Endothelial cell of umbilical vein (primary cell): ENCODE measurements at regions of chr2 and their contacts with region 1.

Region 1: DNA sequence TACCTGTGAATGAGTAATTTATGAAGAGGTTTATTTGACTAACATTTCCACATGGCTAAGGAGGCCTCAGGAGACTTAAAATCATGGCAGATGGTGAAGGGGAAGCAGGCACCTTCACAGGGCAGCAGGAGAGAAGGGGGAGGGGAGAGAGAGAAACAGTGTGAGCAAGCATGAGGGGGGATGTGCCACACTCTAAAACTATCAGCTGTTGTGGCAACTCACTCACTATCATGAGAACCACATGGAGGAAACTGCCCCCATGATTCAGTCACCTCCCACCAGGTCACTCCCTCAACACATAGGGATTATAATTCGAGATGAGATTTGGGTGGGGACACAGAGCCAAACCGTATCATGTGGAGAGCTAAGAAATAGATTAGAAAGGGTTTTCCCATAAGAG is 309.0 kb downstream of the RDH14 start:
- DNase-seq: no peak
- H3K4me3 ChIP-seq: no peak overlapping the region
- H3K27ac ChIP-seq: no peak overlapping the region
- H3K4me1 ChIP-seq: no peaks in the 10 kb centered on the region
- H3K27me3 ChIP-seq: peaks cover 0 to 3% of the 10 kb centered on the region in 2 experiments
- CTCF ChIP-seq: no peak
- POLR2A ChIP-seq: no peak

Region 2: DNA sequence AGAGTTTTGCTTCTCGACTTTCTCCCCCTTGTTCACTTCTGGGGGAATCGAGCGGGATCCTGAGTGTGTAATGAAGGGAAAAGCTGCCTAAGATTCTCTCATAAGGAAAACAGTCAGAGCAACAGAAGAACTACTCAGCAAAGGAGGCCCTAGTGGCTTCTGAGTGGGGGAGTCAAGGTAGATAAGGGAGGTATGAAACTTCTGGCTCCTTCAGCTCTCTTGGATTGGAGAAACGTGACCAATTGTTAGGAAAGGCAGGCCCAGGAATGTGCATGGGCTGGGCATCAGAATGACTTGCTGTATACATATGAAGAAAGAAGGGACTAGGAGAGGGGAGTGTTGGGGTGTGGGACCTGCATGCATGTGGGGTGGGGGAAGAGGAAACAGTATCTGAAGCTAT is 299.9 kb before region 1 on chr2:
- CTCF ChIA-PET with region 1: no interaction called
- POLR2A ChIA-PET with region 1: no interaction called
- dilution Hi-C with region 1: no loop called
- intact Hi-C with region 1: no loop called
- DNase-seq: no peak
- H3K4me3 ChIP-seq: no peak overlapping the region
- H3K27ac ChIP-seq: no peak overlapping the region
- H3K4me1 ChIP-seq: no peaks in the 10 kb centered on the region
- H3K27me3 ChIP-seq: no peaks in the 10 kb centered on the region
- CTCF ChIP-seq: no peak
- POLR2A ChIP-seq: no peak

Region 3: DNA sequence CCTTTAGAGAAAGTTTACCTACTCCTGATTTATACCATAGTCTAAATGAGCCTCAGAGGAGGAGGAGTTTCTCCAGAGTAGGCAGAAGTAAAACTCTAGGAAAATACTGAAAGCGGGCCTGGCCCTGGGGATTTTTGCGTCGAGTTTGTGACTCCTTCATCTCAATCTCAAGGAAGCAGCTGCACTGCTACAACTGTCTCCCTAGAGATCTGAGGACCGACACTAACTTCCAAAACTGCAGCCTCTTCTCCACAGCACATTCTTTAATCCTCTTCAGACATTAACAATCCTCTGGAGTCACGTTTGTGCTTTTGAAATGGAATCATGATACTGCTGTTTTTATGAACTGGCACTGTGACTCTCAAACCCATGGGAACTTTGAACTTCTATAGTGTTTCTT is 91.6 kb before region 1 on chr2:
- CTCF ChIA-PET with region 1: no interaction called
- POLR2A ChIA-PET with region 1: no interaction called
- dilution Hi-C with region 1: no loop called
- intact Hi-C with region 1: no loop called
- DNase-seq: no peak
- H3K4me3 ChIP-seq: no peak overlapping the region
- H3K27ac ChIP-seq: no peak overlapping the region
- H3K4me1 ChIP-seq: no peaks in the 10 kb centered on the region
- H3K27me3 ChIP-seq: no peaks in the 10 kb centered on the region
- CTCF ChIP-seq: no peak
- POLR2A ChIP-seq: no peak

Region 4: GRCh38 chr2:18265614-18266587 is 14.4 kb after region 1 on chr2:
- CTCF ChIA-PET with region 1: interaction called, 5 read pairs
- POLR2A ChIA-PET with region 1: no interaction called
- dilution Hi-C with region 1: no loop called
- intact Hi-C with region 1: loop called (anchors 2 kb)
- DNase-seq: no peak
- H3K4me3 ChIP-seq: no peak overlapping the region
- H3K27ac ChIP-seq: no peak overlapping the region
- H3K4me1 ChIP-seq: no peaks in the 10 kb centered on the region
- H3K27me3 ChIP-seq: no peaks in the 10 kb centered on the region
- CTCF ChIP-seq: peak in 1 of 2 donors; percentile 9
- POLR2A ChIP-seq: no peak